B cell (primary cell): ENCODE measurements at regions of chrX and their contacts with region 1.

Region 1: DNA sequence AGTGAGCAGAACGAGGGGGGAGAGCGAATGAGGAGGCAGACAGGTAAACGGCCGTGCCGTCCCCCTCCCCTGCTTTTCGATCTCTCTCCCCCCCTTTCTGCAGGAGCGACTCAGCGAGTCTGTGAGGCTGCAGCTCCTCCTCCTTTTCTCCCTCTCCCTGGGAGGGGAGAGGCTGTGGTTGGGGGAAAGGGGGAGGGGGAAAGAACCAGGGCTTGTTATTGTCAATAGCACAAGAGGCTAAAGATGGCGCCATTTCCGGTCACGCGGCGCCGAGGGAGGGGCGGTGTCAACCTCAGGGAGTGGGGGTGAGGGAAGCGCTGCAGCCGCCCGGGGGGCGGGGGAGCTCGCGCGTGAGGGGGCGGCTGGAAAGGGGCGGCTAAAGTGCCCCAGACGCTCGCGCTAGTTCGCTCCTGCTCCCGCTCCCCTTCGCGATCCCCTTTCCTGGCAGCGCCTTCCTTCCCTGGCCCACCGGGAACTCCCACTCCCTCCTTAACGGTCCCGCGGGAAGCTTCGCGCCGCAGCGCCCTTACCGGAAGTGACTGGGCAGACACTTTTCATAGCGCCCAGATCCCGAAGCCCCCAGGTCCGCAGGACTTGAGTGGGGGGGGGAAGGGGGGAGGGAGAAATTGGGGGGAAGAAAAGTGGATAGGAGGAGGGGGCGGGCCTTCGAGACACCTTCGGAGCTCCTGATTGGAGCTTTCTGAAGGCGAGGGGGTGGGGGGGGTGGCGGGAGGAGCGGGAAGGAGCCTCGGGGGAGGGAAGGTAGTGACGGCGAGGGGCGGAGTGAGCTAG is at the start of gene CUL4B:
- DNase-seq: peak; percentile 91
- ATAC-seq: peak; percentile 87
- H3K4me3 ChIP-seq: peak within 1 kb of the TSS; percentile 63 to 86 (median 79)
- H3K4me3 Mint-ChIP-seq: peak within 1 kb of the TSS; percentile 98
- H3K27ac ChIP-seq: peak within 1 kb of the TSS; percentile 96 to 97
- H3K27ac Mint-ChIP-seq: peak within 1 kb of the TSS; percentile 97
- H3K4me1 ChIP-seq: peaks cover 9 to 21% of the 10 kb centered on the region in 2 donors
- H3K4me1 Mint-ChIP-seq: peaks cover 38% of the 10 kb centered on the region
- H3K27me3 ChIP-seq: no peaks in the 10 kb centered on the region
- H3K27me3 Mint-ChIP-seq: no peaks in the 10 kb centered on the region
- CTCF ChIP-seq: no peak
- total RNA-seq, gene CUL4B: 53.5 and 56.1 TPM in 2 replicates

Region 2: DNA sequence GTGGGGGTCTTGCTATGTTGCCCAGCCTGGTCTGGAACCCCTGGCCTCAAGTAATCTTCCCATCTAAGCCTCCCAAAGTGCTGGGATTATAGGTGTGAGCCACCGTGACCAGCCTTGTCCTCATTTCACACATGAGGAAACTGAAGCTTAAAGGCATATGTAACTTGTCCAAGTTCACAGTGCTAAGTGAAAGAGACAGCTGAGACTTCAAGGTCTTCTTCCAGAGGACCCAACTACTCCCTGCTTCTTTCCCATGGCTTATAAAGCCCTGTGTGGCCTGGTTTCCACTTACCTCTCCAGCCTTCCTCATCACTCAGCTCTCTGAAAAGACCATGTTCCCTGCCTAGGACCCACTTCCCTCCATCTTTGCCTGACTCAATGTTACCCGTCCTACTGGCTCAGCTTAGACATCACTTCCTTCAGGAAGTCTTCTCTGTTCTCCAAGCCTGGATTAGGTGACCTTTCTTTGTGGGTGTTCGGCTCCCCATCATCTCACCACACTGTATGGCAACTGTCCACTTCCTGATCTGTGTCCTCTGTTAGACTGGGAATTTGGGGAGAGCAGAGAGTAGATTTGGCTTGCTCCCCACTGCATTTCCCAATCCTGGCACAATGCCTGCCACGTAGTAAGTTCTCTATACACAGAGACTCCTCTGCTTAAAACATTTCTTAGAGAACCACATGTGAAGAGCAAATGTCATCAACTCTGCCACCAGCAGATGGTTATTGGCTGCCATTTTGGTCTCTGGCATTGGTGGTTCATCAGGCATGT is 61.6 kb before region 1 on chrX:
- CTCF ChIA-PET with region 1: no interaction called
- POLR2A ChIA-PET with region 1: no interaction called
- intact Hi-C with region 1: loop called (anchors 5 kb)
- DNase-seq: no peak
- ATAC-seq: no peak
- H3K4me3 ChIP-seq: no peak overlapping the region
- H3K4me3 Mint-ChIP-seq: no peak overlapping the region
- H3K27ac ChIP-seq: no peak overlapping the region
- H3K27ac Mint-ChIP-seq: no peak overlapping the region
- H3K4me1 ChIP-seq: no peaks in the 10 kb centered on the region
- H3K4me1 Mint-ChIP-seq: peaks cover 5% of the 10 kb centered on the region
- H3K27me3 ChIP-seq: no peaks in the 10 kb centered on the region
- H3K27me3 Mint-ChIP-seq: no peaks in the 10 kb centered on the region
- CTCF ChIP-seq: no peak

Region 3: GRCh38 chrX:120536061-120536460 is 25.0 kb before region 1 on chrX:
- CTCF ChIA-PET with region 1: no interaction called
- POLR2A ChIA-PET with region 1: no interaction called
- intact Hi-C with region 1: loop called (anchors 2 kb)
- DNase-seq: peak; percentile 57
- ATAC-seq: peak; percentile 71
- H3K4me3 ChIP-seq: no peak overlapping the region
- H3K4me3 Mint-ChIP-seq: peak overlapping the region; percentile 13
- H3K27ac ChIP-seq: peak overlapping the region; percentile 20 to 63
- H3K27ac Mint-ChIP-seq: peak overlapping the region; percentile 63
- H3K4me1 ChIP-seq: peaks cover 21 to 28% of the 10 kb centered on the region in 2 donors
- H3K4me1 Mint-ChIP-seq: peaks cover 22% of the 10 kb centered on the region
- H3K27me3 ChIP-seq: no peaks in the 10 kb centered on the region
- H3K27me3 Mint-ChIP-seq: no peaks in the 10 kb centered on the region
- CTCF ChIP-seq: no peak

Region 4: GRCh38 chrX:120585702-120586101 is 24.7 kb after region 1 on chrX:
- CTCF ChIA-PET with region 1: no interaction called
- POLR2A ChIA-PET with region 1: interaction called, 10 read pairs
- intact Hi-C with region 1: no loop called
- DNase-seq: no peak
- ATAC-seq: no peak
- H3K4me3 ChIP-seq: no peak overlapping the region
- H3K4me3 Mint-ChIP-seq: no peak overlapping the region
- H3K27ac ChIP-seq: no peak overlapping the region
- H3K27ac Mint-ChIP-seq: no peak overlapping the region
- H3K4me1 ChIP-seq: no peaks in the 10 kb centered on the region
- H3K4me1 Mint-ChIP-seq: no peaks in the 10 kb centered on the region
- H3K27me3 ChIP-seq: no peaks in the 10 kb centered on the region
- H3K27me3 Mint-ChIP-seq: no peaks in the 10 kb centered on the region
- CTCF ChIP-seq: no peak

Region 5: GRCh38 chrX:120603707-120604360 is 42.8 kb after region 1 on chrX and contains the start of gene MCTS1:
- CTCF ChIA-PET with region 1: interaction called, 14 read pairs
- POLR2A ChIA-PET with region 1: interaction called, 25 read pairs
- intact Hi-C with region 1: loop called (anchors 1 kb)
- DNase-seq: peak; percentile 88
- ATAC-seq: peak; percentile 93
- H3K4me3 ChIP-seq: peak within 1 kb of the TSS; percentile 68 to 88 (median 70)
- H3K4me3 Mint-ChIP-seq: peak within 1 kb of the TSS; percentile 90
- H3K27ac ChIP-seq: peak within 1 kb of the TSS; percentile 78 to 94
- H3K27ac Mint-ChIP-seq: peak within 1 kb of the TSS; percentile 94
- H3K4me1 ChIP-seq: peaks cover 10% of the 10 kb centered on the region in 2 donors
- H3K4me1 Mint-ChIP-seq: peaks cover 13% of the 10 kb centered on the region
- H3K27me3 ChIP-seq: no peaks in the 10 kb centered on the region
- H3K27me3 Mint-ChIP-seq: no peaks in the 10 kb centered on the region
- CTCF ChIP-seq: no peak
- total RNA-seq, gene MCTS1: 25.5 and 27.9 TPM in 2 replicates

Region 6: DNA sequence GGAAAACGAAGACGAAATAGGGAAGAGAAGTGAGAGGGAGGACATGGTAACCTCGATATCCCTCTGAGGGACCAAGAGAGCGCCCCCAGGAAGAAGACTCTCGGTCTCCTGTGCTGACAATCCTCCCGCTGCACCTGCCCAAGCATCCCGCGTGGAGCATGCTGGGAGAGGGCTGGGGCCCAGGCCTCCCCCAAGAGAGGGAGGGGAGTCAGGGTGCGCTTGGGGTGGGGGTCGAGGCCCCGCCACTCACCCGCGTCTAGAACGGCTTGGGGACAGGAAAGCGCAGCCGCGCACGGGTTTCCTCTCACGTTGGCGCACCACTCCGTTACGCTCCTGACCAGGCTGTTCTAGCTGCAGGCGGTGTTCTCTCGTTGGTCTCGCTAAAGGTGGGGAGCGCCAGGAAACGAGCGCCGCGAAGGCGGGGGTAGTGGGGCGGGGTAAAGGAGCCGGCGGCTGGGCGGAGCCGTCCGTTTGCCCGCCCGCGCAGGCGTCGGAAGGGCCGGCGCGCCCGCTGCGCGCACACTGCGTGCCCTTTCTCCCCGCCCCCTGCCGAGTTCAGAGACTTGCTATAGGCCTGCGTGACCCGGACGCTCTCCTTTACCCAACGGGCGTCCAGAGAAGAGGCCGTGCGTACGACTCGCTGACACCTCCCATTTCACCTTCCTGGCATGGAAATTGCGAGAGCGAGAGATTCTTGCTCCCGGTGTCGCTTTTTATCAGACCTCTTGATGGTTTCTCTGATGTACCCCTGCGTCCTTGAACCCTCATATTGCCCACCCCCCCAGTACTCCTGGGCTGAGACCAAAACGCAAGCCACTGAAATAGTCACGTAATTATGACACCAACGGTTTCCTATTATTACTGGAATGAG is 68.9 kb after region 1 on chrX and contains the start of gene C1GALT1C1:
- CTCF ChIA-PET with region 1: interaction called, 3 read pairs
- POLR2A ChIA-PET with region 1: interaction called, 7 read pairs
- intact Hi-C with region 1: loop called (anchors 1 kb)
- DNase-seq: peak; percentile 94
- ATAC-seq: peak; percentile 92
- H3K4me3 ChIP-seq: peak within 1 kb of the TSS; percentile 62 to 81 (median 69)
- H3K4me3 Mint-ChIP-seq: peak within 1 kb of the TSS; percentile 95
- H3K27ac ChIP-seq: peak within 1 kb of the TSS; percentile 95 to 96
- H3K27ac Mint-ChIP-seq: peak within 1 kb of the TSS; percentile 97
- H3K4me1 ChIP-seq: peaks cover 12 to 18% of the 10 kb centered on the region in 2 donors
- H3K4me1 Mint-ChIP-seq: peaks cover 14% of the 10 kb centered on the region
- H3K27me3 ChIP-seq: no peaks in the 10 kb centered on the region
- H3K27me3 Mint-ChIP-seq: no peaks in the 10 kb centered on the region
- CTCF ChIP-seq: no peak
- total RNA-seq, gene C1GALT1C1: 11.6 and 13.6 TPM in 2 replicates

Region 7: GRCh38 chrX:120755066-120755846 is 194.2 kb after region 1 on chrX:
- CTCF ChIA-PET with region 1: interaction called, 3 read pairs
- POLR2A ChIA-PET with region 1: interaction called, 6 read pairs
- intact Hi-C with region 1: loop called (anchors 1 kb)
- DNase-seq: peak; percentile 82
- ATAC-seq: peak; percentile 79
- H3K4me3 ChIP-seq: peak overlapping the region in 1 of 5 experiments; percentile 13
- H3K4me3 Mint-ChIP-seq: peak overlapping the region; percentile 47
- H3K27ac ChIP-seq: peak overlapping the region; percentile 87 to 88
- H3K27ac Mint-ChIP-seq: peak overlapping the region; percentile 86
- H3K4me1 ChIP-seq: peaks cover 82 to 83% of the 10 kb centered on the region in 2 donors
- H3K4me1 Mint-ChIP-seq: peaks cover 89% of the 10 kb centered on the region
- H3K27me3 ChIP-seq: no peaks in the 10 kb centered on the region
- H3K27me3 Mint-ChIP-seq: no peaks in the 10 kb centered on the region
- CTCF ChIP-seq: no peak